ENCODE measurements at regions of chr21 and their contacts with region 1.

Region 1: GRCh38 chr21:34630536-34631143 is 15.7 kb upstream of the RCAN1 start:
- DNase-seq: peak; percentile 52
- ATAC-seq: peak; percentile 73
- H3K4me3 Mint-ChIP-seq: no peak overlapping the region
- H3K27ac Mint-ChIP-seq: no peak overlapping the region
- H3K4me1 Mint-ChIP-seq: no peaks in the 10 kb centered on the region
- H3K27me3 Mint-ChIP-seq: peaks cover 8% of the 10 kb centered on the region

Region 2: DNA sequence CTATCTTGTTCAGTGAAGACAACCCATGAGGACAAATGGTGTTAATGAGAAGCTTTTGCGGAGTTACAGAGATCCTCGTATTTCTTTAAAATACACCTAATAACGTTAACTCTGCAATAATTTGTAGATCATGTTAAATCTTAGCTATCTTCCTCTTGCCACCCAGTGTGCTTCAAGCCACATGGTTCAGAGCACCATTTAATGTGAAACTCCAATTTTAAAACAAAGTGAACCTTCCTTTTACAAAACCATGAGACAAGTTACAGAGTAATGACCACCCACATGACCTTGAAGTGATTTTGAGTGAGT is 268.6 kb before region 1 on chr21:
- CTCF ChIA-PET with region 1: interaction called, 14 read pairs
- POLR2A ChIA-PET with region 1: no interaction called
- DNase-seq: no peak
- ATAC-seq: peak; percentile 26
- H3K4me3 Mint-ChIP-seq: no peak overlapping the region
- H3K27ac Mint-ChIP-seq: no peak overlapping the region
- H3K4me1 Mint-ChIP-seq: peaks cover 7% of the 10 kb centered on the region
- H3K27me3 Mint-ChIP-seq: peaks cover 11% of the 10 kb centered on the region

Region 3: GRCh38 chr21:34510148-34511142 is 120.2 kb before region 1 on chr21:
- CTCF ChIA-PET with region 1: interaction called, 10 read pairs
- POLR2A ChIA-PET with region 1: interaction called, 3 read pairs
- DNase-seq: peak; percentile 51
- ATAC-seq: peak; percentile 64
- H3K4me3 Mint-ChIP-seq: no peak overlapping the region
- H3K27ac Mint-ChIP-seq: no peak overlapping the region
- H3K4me1 Mint-ChIP-seq: no peaks in the 10 kb centered on the region
- H3K27me3 Mint-ChIP-seq: no peaks in the 10 kb centered on the region